Activated CD4-positive, alpha-beta memory T cell treated with anti-CD3 and anti-CD28 coated beads, Interleukin-2, amount 10 ng/mL, durations not matched to agents 7 days and 5 days (primary cell): ENCODE measurements at regions of chr17 and their contacts with region 1.

Region 1: GRCh38 chr17:32783602-32784001 is 93.3 kb downstream of the MYO1D start:
- DNase-seq: no peak
- H3K4me3 Mint-ChIP-seq: no peak overlapping the region
- H3K27ac Mint-ChIP-seq: no peak overlapping the region
- H3K4me1 Mint-ChIP-seq: no peaks in the 10 kb centered on the region
- H3K27me3 Mint-ChIP-seq: peaks cover 3% of the 10 kb centered on the region

Region 2: DNA sequence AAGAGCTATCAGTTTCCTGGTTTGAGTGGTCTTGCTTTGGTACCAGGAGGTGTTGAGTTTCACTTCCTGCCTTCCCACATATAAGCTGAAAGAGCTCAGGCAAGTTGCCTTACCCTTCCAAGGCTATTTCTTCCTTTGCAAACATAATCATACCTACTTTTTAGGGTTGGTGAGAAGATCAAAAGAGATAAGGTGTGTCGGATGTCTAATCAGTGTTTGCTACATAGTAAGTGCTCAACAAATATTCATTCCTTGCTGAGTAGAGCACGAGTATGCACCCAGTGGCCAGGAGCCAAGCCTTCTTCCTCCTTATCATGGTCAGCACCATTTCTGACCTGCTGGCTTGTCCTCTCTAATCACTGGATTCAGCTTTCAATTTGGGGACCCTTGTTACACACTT is 131.6 kb after region 1 on chr17:
- CTCF ChIA-PET with region 1: interaction called, 14 read pairs
- POLR2A ChIA-PET with region 1: no interaction called
- DNase-seq: no peak
- H3K4me3 Mint-ChIP-seq: no peak overlapping the region
- H3K27ac Mint-ChIP-seq: peak overlapping the region; percentile 52
- H3K4me1 Mint-ChIP-seq: peaks cover 49% of the 10 kb centered on the region
- H3K27me3 Mint-ChIP-seq: no peaks in the 10 kb centered on the region

Region 3: GRCh38 chr17:32936894-32937500 is 153.4 kb after region 1 on chr17:
- CTCF ChIA-PET with region 1: interaction called, 64 read pairs
- POLR2A ChIA-PET with region 1: no interaction called
- DNase-seq: peak; percentile 69
- H3K4me3 Mint-ChIP-seq: peak overlapping the region; percentile 10
- H3K27ac Mint-ChIP-seq: no peak overlapping the region
- H3K4me1 Mint-ChIP-seq: peaks cover 6% of the 10 kb centered on the region
- H3K27me3 Mint-ChIP-seq: peaks cover 13% of the 10 kb centered on the region

Region 4: DNA sequence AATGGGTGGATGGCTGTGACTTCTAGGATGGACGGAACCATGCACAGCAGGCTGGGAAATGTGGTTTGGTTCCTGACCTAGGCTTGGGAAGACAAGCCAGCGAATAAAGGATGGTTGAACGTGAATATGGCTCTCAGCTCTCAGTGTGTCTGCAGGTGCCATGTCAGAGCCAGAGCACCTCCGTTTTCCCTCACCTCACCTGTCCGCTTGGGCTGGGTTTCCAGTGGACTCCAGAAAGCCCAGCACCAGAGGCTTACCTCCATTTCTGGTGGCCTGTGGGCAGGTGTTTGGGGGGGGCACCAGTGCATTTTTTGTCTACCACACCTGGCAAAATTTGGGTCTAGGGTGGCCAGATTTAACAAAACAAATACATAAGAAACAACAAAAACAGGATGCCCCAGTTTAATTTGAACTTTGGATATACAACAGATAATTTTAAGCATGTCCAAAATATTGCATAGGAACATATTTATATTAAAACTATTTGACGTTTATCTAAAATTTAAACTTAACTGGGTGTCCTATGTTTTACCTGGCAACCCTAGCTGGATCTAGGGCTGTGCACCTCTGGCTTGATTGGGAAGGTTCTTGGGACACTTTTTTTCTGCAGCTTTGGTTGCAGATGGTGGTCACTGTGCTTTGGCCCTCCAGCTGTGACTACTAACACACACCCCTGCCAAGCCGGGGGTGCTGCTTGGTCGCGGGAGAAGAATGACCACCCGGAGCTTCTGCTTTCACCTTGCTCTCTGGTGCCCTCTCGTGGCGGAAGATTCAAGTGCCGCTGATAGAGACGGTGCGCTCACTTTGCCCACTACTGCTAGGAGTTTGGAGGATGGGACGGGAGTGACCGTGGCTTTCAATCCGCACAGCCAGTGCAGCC is 214.4 kb after region 1 on chr17:
- CTCF ChIA-PET with region 1: interaction called, 11 read pairs
- POLR2A ChIA-PET with region 1: no interaction called
- DNase-seq: peak; percentile 77
- H3K4me3 Mint-ChIP-seq: no peak overlapping the region
- H3K27ac Mint-ChIP-seq: no peak overlapping the region
- H3K4me1 Mint-ChIP-seq: peaks cover 5% of the 10 kb centered on the region
- H3K27me3 Mint-ChIP-seq: peaks cover 26% of the 10 kb centered on the region

Region 5: DNA sequence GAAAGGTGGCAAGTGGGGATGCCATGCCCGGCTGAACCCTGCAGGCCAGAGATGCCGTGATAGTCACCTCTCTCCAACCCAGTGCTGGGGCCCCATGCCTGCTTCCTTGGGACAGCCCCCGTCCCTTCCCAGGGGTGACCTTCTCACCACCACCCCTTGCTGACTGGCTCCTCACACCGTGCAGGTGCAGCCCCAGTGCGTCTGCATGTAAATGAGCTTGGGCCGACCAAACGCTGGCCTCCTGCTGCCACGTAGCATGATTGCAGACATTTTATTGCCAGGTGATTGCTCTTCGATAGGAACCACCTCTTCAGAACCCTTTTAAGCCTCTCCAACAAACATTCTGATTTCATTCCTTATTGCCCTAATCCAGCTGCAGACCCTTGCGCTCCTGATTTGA is 477.0 kb after region 1 on chr17:
- CTCF ChIA-PET with region 1: no interaction called
- POLR2A ChIA-PET with region 1: no interaction called
- DNase-seq: no peak
- H3K4me3 Mint-ChIP-seq: no peak overlapping the region
- H3K27ac Mint-ChIP-seq: no peak overlapping the region
- H3K4me1 Mint-ChIP-seq: no peaks in the 10 kb centered on the region
- H3K27me3 Mint-ChIP-seq: peaks cover 1% of the 10 kb centered on the region